Naive thymus-derived CD4-positive, alpha-beta T cell (primary cell): ENCODE measurements at regions of chr2 and their contacts with region 1.

Region 1: DNA sequence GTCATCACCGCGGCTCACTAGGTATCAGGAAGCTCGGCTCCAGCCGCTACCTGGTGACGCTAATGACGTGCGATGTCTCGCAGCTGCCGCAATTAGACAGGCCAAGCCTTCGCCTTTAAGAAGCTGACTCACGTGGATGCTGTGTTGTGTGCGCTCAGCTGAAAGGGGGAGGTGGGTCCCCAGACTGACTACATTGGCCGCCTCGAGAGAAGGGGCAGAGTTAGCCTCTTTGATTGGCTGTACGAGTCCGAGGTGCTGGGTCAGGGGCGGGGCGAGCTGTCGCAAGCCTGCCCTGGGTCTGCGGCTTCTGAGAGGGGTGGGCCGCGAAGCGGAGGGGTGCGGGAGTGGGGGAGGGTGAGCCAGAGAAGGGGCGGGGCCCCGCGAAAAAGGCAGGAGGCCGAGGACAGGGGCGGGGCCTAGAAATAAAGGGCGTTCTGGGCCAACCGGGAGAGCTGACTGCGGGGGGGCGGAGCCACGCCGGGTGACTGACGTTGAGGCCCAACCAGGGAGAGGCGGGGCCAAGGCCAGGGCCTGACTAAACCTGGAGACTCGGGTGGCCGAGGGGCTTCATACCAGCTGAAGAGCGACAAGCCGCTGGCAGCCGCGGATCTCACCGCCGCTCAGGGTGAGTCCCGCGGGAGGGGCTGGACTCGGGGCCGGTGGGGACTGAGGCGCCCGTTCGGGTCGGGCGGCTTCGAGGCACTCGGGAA is at the start of gene YPEL5:
- DNase-seq: peak; percentile 98 to 100 (median 100)
- ATAC-seq: peak; percentile 88
- H3K4me3 ChIP-seq: peak within 1 kb of the TSS; percentile 74
- H3K4me3 Mint-ChIP-seq: peak within 1 kb of the TSS; percentile 83 to 93 (median 88)
- H3K27ac ChIP-seq: peak within 1 kb of the TSS; percentile 100
- H3K27ac Mint-ChIP-seq: peak within 1 kb of the TSS; percentile 99 to 100 (median 99)
- H3K4me1 ChIP-seq: peaks cover 31 to 40% of the 10 kb centered on the region in 2 donors
- H3K4me1 Mint-ChIP-seq: peaks cover 38 to 75% (median 56%) of the 10 kb centered on the region in 7 donors
- H3K27me3 ChIP-seq: no peaks in the 10 kb centered on the region
- H3K27me3 Mint-ChIP-seq: no peaks in the 10 kb centered on the region
- total RNA-seq, gene YPEL5: 30.9 to 1,022 (median 98.3) TPM

Region 2: GRCh38 chr2:28392297-28393113 is 1754.1 kb before region 1 on chr2 and contains the start of gene FOSL2:
- CTCF ChIA-PET with region 1: no interaction called
- POLR2A ChIA-PET with region 1: no interaction called
- intact Hi-C with region 1: loop called in 1 of 2 experiments (anchors 2 kb)
- DNase-seq: peak; percentile 87 to 98 (median 92)
- ATAC-seq: peak; percentile 85
- H3K4me3 ChIP-seq: peak within 1 kb of the TSS; percentile 92
- H3K4me3 Mint-ChIP-seq: peak within 1 kb of the TSS in 7 of 10 donors; percentile 86 to 99 (median 91)
- H3K27ac ChIP-seq: peak within 1 kb of the TSS; percentile 88
- H3K27ac Mint-ChIP-seq: peak within 1 kb of the TSS in 8 of 9 donors; percentile 92 to 98 (median 98)
- H3K4me1 ChIP-seq: peaks cover 16 to 18% of the 10 kb centered on the region in 2 donors
- H3K4me1 Mint-ChIP-seq: peaks cover 6 to 45% (median 21%) of the 10 kb centered on the region in 7 donors
- H3K27me3 ChIP-seq: no peaks in the 10 kb centered on the region
- H3K27me3 Mint-ChIP-seq: no peaks in the 10 kb centered on the region
- total RNA-seq, gene FOSL2: 0.81 to 251 (median 33.9) TPM

Region 3: DNA sequence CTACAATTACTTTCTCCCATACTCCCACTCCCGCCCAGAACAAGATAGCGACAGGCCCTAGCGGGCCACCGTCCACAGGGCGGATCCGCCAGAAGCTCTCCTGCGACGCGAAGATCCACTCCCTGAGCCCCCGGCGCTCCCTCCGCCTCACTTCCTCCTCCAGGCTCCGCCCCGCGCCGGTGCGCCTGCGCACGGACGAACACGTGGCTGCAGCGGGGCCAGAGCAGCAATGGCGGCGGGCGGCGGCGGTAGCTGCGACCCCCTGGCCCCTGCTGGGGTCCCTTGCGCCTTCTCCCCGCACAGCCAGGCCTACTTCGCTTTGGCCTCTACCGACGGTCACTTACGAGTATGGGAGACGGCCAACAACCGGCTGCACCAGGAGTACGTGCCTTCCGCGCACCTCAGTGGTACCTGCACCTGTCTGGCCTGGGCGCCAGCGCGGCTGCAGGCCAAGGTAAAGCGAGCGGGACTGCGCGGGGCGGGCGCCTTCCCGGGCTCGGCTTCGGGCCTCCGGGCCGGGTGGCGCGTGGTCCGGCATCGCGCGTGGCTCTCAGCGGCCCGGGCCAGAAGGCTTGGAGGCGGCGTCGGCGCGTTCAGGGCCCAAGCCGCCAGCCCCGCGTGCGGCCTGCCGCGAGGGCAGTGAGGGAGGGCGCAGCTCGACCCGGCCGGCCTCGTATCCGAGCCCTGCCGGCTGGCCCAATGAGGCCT is 1252.0 kb before region 1 on chr2 and contains the start of gene WDR43:
- CTCF ChIA-PET with region 1: no interaction called
- POLR2A ChIA-PET with region 1: interaction called, 3 read pairs
- intact Hi-C with region 1: loop called (anchors 2 to 10 kb)
- DNase-seq: peak; percentile 97 to 100 (median 99)
- ATAC-seq: peak; percentile 100
- H3K4me3 ChIP-seq: peak within 1 kb of the TSS; percentile 88
- H3K4me3 Mint-ChIP-seq: peak within 1 kb of the TSS; percentile 91 to 99 (median 98)
- H3K27ac ChIP-seq: peak within 1 kb of the TSS; percentile 78
- H3K27ac Mint-ChIP-seq: peak within 1 kb of the TSS; percentile 91 to 99 (median 94)
- H3K4me1 ChIP-seq: peaks cover 28% of the 10 kb centered on the region in 2 donors
- H3K4me1 Mint-ChIP-seq: peaks cover 31 to 49% (median 43%) of the 10 kb centered on the region in 7 donors
- H3K27me3 ChIP-seq: no peaks in the 10 kb centered on the region
- H3K27me3 Mint-ChIP-seq: peaks cover 0 to 2% (median 0%) of the 10 kb centered on the region in 5 donors
- total RNA-seq, gene WDR43: 49.6 to 75.0 (median 63.9) TPM

Region 4: DNA sequence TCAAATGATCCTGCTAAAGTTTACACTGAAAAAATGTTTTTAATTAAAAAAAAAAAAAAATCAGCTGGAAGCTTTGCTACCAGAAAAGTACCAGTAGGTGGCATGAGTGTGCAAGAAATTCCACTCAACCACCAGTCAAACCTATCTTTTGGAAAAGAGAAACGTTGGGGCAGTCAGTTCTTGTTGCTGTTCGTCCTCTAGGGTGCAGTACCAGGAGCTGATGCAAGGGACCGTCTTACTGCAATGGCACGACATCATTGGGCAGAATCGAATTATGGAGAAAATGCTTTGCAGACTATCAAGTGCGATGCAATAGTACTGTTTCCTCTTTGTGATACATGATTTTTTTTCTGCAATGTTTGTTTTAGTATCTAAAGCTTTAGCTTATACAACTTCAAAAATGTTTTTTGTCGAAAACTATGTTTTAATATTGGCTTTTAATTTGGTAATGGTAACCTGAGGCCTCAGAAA is 18.5 kb after region 1 on chr2:
- CTCF ChIA-PET with region 1: interaction called, 74 read pairs
- POLR2A ChIA-PET with region 1: interaction called, 16 read pairs
- intact Hi-C with region 1: loop called in 1 of 2 experiments (anchors 1 kb)
- DNase-seq: peak in 8 of 9 donors; percentile 41 to 89 (median 84)
- ATAC-seq: peak; percentile 75
- H3K4me3 ChIP-seq: no peak overlapping the region
- H3K4me3 Mint-ChIP-seq: peak overlapping the region in 1 of 10 donors; percentile 37
- H3K27ac ChIP-seq: no peak overlapping the region
- H3K27ac Mint-ChIP-seq: peak overlapping the region in 4 of 9 donors; percentile 19 to 76 (median 50)
- H3K4me1 ChIP-seq: peaks cover 0 to 5% of the 10 kb centered on the region in 2 donors
- H3K4me1 Mint-ChIP-seq: peaks cover 3 to 12% (median 6%) of the 10 kb centered on the region in 7 donors
- H3K27me3 ChIP-seq: no peaks in the 10 kb centered on the region
- H3K27me3 Mint-ChIP-seq: no peaks in the 10 kb centered on the region

Region 5: GRCh38 chr2:30191819-30192271 is 45.3 kb after region 1 on chr2:
- CTCF ChIA-PET with region 1: no interaction called
- POLR2A ChIA-PET with region 1: no interaction called
- intact Hi-C with region 1: no loop called
- DNase-seq: no peak
- ATAC-seq: no peak
- H3K4me3 ChIP-seq: no peak overlapping the region
- H3K4me3 Mint-ChIP-seq: no peak overlapping the region
- H3K27ac ChIP-seq: no peak overlapping the region
- H3K27ac Mint-ChIP-seq: no peak overlapping the region
- H3K4me1 ChIP-seq: no peaks in the 10 kb centered on the region
- H3K4me1 Mint-ChIP-seq: peaks cover 0 to 8% (median 6%) of the 10 kb centered on the region in 7 donors
- H3K27me3 ChIP-seq: no peaks in the 10 kb centered on the region
- H3K27me3 Mint-ChIP-seq: peaks cover 0 to 5% (median 0%) of the 10 kb centered on the region in 5 donors

Region 6: GRCh38 chr2:30231212-30231995 is 84.8 kb after region 1 on chr2 and contains the start of gene LBH:
- CTCF ChIA-PET with region 1: interaction called, 3 read pairs
- POLR2A ChIA-PET with region 1: interaction called, 119 read pairs
- intact Hi-C with region 1: loop called (anchors 1 kb)
- DNase-seq: peak; percentile 74 to 92 (median 88)
- ATAC-seq: peak; percentile 72
- H3K4me3 ChIP-seq: peak within 1 kb of the TSS; percentile 75
- H3K4me3 Mint-ChIP-seq: peak within 1 kb of the TSS; percentile 87 to 98 (median 94)
- H3K27ac ChIP-seq: peak within 1 kb of the TSS; percentile 97
- H3K27ac Mint-ChIP-seq: peak within 1 kb of the TSS; percentile 87 to 100 (median 96)
- H3K4me1 ChIP-seq: peaks cover 49 to 55% of the 10 kb centered on the region in 2 donors
- H3K4me1 Mint-ChIP-seq: peaks cover 26 to 65% (median 57%) of the 10 kb centered on the region in 7 donors
- H3K27me3 ChIP-seq: no peaks in the 10 kb centered on the region
- H3K27me3 Mint-ChIP-seq: peaks cover 0 to 8% (median 0%) of the 10 kb centered on the region in 5 donors
- total RNA-seq, gene LBH: 146 to 517 (median 192) TPM

Region 7: DNA sequence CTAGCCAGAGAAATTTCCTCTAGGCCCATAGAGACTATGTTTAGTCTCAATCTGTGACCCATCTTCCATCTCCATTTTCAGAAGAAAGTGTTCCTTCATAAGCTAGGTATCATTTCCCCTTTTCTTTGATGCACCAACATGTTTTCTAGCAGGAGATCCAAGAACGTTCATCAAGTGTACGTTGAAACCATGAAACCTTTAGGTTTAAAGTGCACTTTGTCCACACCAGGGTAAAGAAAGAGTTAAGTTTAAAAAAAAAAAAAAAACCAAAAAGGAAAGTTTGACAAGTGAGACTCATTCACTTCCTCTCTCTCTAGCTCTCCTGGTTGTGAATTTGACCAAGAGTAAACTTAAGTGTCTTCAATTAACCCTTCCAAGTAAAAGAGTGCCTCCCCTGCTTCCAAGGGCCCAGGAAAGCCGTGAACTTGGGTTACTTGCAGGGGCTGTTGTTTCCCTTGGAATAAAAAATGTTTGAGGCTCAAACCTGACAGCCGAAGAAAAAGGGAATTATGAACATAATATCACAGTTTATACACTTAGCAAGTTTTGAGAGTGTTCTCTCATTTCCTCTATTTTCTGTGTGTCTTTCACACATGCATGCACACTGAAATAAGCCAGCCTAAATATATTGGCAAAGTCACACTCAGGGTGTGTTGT is 141.4 kb after region 1 on chr2:
- CTCF ChIA-PET with region 1: no interaction called
- POLR2A ChIA-PET with region 1: no interaction called
- intact Hi-C with region 1: no loop called
- DNase-seq: peak in 5 of 9 donors; percentile 13 to 23 (median 14)
- ATAC-seq: no peak
- H3K4me3 ChIP-seq: no peak overlapping the region
- H3K4me3 Mint-ChIP-seq: peak overlapping the region in 9 of 10 donors; percentile 8 to 70 (median 50)
- H3K27ac ChIP-seq: no peak overlapping the region
- H3K27ac Mint-ChIP-seq: peak overlapping the region; percentile 14 to 66 (median 44)
- H3K4me1 ChIP-seq: peaks cover 0 to 21% of the 10 kb centered on the region in 2 donors
- H3K4me1 Mint-ChIP-seq: peaks cover 25 to 38% (median 30%) of the 10 kb centered on the region in 7 donors
- H3K27me3 ChIP-seq: no peaks in the 10 kb centered on the region
- H3K27me3 Mint-ChIP-seq: no peaks in the 10 kb centered on the region

Region 8: DNA sequence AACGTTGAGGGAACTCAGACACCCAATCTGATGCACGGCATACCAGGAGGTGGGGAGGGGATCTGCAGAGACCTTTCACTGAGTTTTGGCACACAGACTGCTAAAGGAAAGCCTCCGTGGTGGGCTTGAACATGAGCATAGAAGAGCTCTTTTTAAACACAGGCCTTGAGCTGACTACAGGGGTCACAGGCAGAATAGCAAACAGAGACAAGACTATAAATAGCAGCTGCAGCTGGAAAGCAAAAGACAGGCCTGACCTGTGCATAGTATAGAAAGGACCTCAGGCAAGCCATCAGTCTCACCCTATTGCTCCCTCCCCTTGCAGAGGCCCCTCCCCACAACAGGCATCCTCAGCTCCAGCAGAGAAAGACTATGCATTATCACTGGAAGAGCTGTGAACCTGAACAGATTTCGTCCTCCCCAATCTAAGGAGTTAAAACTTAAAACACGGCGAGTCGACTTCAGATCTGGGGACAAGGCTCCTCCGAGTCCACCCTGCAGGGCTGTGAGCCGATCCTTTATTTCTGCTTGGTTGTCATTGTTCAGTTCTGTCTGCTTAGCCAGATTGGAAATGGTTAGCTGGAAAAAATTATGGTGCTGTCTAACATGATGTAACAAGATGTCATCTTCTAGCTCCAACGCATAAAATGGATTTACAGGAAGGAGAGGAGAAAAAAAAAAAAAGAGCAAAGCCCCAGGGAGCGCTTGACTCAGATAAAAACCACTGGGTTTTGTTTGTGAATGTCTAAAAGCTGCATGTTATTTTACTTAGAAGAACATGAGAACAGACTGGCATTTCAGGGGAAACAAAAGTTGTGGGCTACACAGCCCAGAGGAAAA is 275.2 kb after region 1 on chr2:
- CTCF ChIA-PET with region 1: no interaction called
- POLR2A ChIA-PET with region 1: interaction called, 7 read pairs
- intact Hi-C with region 1: loop called (anchors 1 to 5 kb)
- DNase-seq: peak in 5 of 9 donors; percentile 24 to 68 (median 44)
- ATAC-seq: peak; percentile 10
- H3K4me3 ChIP-seq: peak overlapping the region; percentile 32
- H3K4me3 Mint-ChIP-seq: peak overlapping the region; percentile 41 to 76 (median 70)
- H3K27ac ChIP-seq: peak overlapping the region; percentile 70
- H3K27ac Mint-ChIP-seq: peak overlapping the region; percentile 91 to 98 (median 93)
- H3K4me1 ChIP-seq: peaks cover 24 to 48% of the 10 kb centered on the region in 2 donors
- H3K4me1 Mint-ChIP-seq: peaks cover 35 to 64% (median 54%) of the 10 kb centered on the region in 7 donors
- H3K27me3 ChIP-seq: no peaks in the 10 kb centered on the region
- H3K27me3 Mint-ChIP-seq: no peaks in the 10 kb centered on the region

Region 9: DNA sequence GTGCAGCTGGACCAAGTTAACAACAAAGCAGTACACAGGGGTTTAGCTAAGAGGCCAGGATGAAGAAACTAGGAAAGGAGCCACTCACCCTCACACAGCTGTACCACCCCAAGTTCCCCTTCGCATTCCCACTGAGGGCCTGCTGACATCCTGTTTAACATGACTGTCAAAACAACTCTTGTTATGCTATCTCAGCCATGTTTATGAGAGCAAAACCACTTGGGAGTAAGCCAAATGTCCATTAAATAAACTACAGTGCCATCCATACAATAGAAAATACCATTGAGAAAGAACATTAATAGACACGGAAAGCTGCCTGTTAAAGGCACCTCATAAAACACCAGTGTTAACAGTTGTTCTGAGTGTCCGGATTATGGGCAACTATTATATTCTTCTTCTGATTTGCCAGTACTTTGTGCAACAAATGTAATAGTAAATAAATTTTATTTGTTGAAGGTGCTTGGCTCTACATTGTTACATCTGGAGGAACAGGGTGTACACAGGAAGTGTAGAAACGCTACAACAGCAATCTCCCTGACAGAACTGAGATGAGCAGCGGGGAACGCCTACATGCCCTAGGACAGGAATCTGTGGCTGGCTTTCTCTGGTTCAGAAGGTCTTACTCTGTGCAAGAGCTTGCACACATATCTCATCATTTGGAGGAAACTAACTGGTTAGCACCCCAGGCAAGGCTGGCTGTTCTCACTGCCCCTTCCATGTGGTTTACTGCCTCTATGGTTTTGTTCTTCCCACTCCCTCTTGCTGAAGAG is 1173.0 kb after region 1 on chr2:
- CTCF ChIA-PET with region 1: no interaction called
- POLR2A ChIA-PET with region 1: no interaction called
- intact Hi-C with region 1: loop called in 1 of 2 experiments (anchors 5 kb)
- DNase-seq: peak in 5 of 9 donors; percentile 11 to 32 (median 15)
- ATAC-seq: peak; percentile 68
- H3K4me3 ChIP-seq: no peak overlapping the region
- H3K4me3 Mint-ChIP-seq: peak overlapping the region; percentile 7 to 72 (median 61)
- H3K27ac ChIP-seq: no peak overlapping the region
- H3K27ac Mint-ChIP-seq: peak overlapping the region; percentile 65 to 92 (median 73)
- H3K4me1 ChIP-seq: peaks cover 34 to 42% of the 10 kb centered on the region in 2 donors
- H3K4me1 Mint-ChIP-seq: peaks cover 42 to 69% (median 64%) of the 10 kb centered on the region in 7 donors
- H3K27me3 ChIP-seq: no peaks in the 10 kb centered on the region
- H3K27me3 Mint-ChIP-seq: no peaks in the 10 kb centered on the region